RWPE1 (cell line): ENCODE measurements at regions of chr3 and their contacts with region 1.

Region 1: GRCh38 chr3:143875546-143875945 is 27.3 kb upstream of the SLC9A9 start:
- DNase-seq: no peak
- H3K27ac ChIP-seq: no peak overlapping the region
- CTCF ChIP-seq: no peak

Region 2: DNA sequence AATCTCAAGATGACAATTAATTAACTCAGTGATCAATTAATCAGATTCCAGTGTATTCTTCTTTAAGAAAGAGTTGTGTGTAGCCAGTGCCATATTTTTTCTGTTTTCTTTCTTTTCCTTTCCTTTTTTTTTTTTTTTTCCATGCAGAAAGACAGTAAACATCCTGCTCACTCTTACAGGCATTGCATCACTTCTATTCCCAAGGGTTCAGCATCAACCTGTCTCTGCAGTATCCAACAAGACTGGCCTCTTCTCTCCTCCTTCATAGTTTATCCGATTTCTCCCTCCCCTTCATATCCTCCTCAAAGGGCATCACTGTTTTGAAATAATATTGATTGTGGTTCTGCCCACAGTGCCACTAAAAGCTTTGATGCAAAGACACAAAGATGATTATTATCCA is 10.2 kb before region 1 on chr3:
- CTCF ChIA-PET with region 1: no interaction called
- POLR2A ChIA-PET with region 1: no interaction called
- DNase-seq: no peak
- H3K27ac ChIP-seq: no peak overlapping the region
- CTCF ChIP-seq: no peak

Region 3: GRCh38 chr3:143998266-143998665 is 122.7 kb after region 1 on chr3:
- CTCF ChIA-PET with region 1: no interaction called
- POLR2A ChIA-PET with region 1: no interaction called
- DNase-seq: no peak
- H3K27ac ChIP-seq: no peak overlapping the region
- CTCF ChIP-seq: no peak

Region 4: GRCh38 chr3:144104186-144104585 is 228.6 kb after region 1 on chr3:
- CTCF ChIA-PET with region 1: interaction called, 10 read pairs
- POLR2A ChIA-PET with region 1: no interaction called
- DNase-seq: no peak
- H3K27ac ChIP-seq: no peak overlapping the region
- CTCF ChIP-seq: no peak